ENCODE measurements at regions of chr1 and their contacts with region 1.

Region 1: GRCh38 chr1:226121587-226122400 is 59.3 kb downstream of the H3-3A start:
- DNase-seq: peak; percentile 44 to 86 (median 75)
- ATAC-seq: peak; percentile 59
- H3K4me3 ChIP-seq: peak overlapping the region; percentile 48 to 61
- H3K4me3 Mint-ChIP-seq: peak overlapping the region; percentile 83
- H3K27ac ChIP-seq: peak overlapping the region; percentile 57 to 70
- H3K27ac Mint-ChIP-seq: peak overlapping the region; percentile 71
- H3K4me1 ChIP-seq: peaks cover 23% of the 10 kb centered on the region
- H3K4me1 Mint-ChIP-seq: peaks cover 26% of the 10 kb centered on the region
- H3K27me3 ChIP-seq: no peaks in the 10 kb centered on the region
- H3K27me3 Mint-ChIP-seq: no peaks in the 10 kb centered on the region
- CTCF ChIP-seq: peak; percentile 82

Region 2: GRCh38 chr1:225467193-225468020 is 654.4 kb before region 1 on chr1:
- CTCF ChIA-PET with region 1: interaction called, 3 read pairs
- POLR2A ChIA-PET with region 1: no interaction called
- intact Hi-C with region 1: loop called in 1 of 2 experiments (anchors 2 kb)
- DNase-seq: peak; percentile 67 to 93 (median 86)
- ATAC-seq: peak; percentile 81
- H3K4me3 ChIP-seq: peak overlapping the region; percentile 60 to 86
- H3K4me3 Mint-ChIP-seq: peak overlapping the region; percentile 92
- H3K27ac ChIP-seq: peak overlapping the region; percentile 88 to 95
- H3K27ac Mint-ChIP-seq: peak overlapping the region; percentile 98
- H3K4me1 ChIP-seq: peaks cover 35% of the 10 kb centered on the region
- H3K4me1 Mint-ChIP-seq: peaks cover 43% of the 10 kb centered on the region
- H3K27me3 ChIP-seq: no peaks in the 10 kb centered on the region
- H3K27me3 Mint-ChIP-seq: no peaks in the 10 kb centered on the region
- CTCF ChIP-seq: no peak

Region 3: GRCh38 chr1:225999227-225999911 is 122.4 kb before region 1 on chr1 and contains the start of gene SDE2:
- CTCF ChIA-PET with region 1: no interaction called
- POLR2A ChIA-PET with region 1: interaction called, 9 read pairs
- intact Hi-C with region 1: loop called (anchors 1 to 2 kb)
- DNase-seq: peak; percentile 99 to 100 (median 100)
- ATAC-seq: peak; percentile 80
- H3K4me3 ChIP-seq: peak within 1 kb of the TSS; percentile 82 to 92
- H3K4me3 Mint-ChIP-seq: peak within 1 kb of the TSS; percentile 100
- H3K27ac ChIP-seq: peak within 1 kb of the TSS; percentile 99
- H3K27ac Mint-ChIP-seq: peak within 1 kb of the TSS; percentile 100
- H3K4me1 ChIP-seq: peaks cover 88% of the 10 kb centered on the region
- H3K4me1 Mint-ChIP-seq: peaks cover 79% of the 10 kb centered on the region
- H3K27me3 ChIP-seq: no peaks in the 10 kb centered on the region
- H3K27me3 Mint-ChIP-seq: no peaks in the 10 kb centered on the region
- CTCF ChIP-seq: no peak
- total RNA-seq, gene SDE2: 53.3 to 55.3 TPM

Region 4: GRCh38 chr1:226083302-226084101 is 38.3 kb before region 1 on chr1:
- CTCF ChIA-PET with region 1: interaction called, 9 read pairs
- POLR2A ChIA-PET with region 1: interaction called, 5 read pairs
- intact Hi-C with region 1: loop called (anchors 1 to 2 kb)
- DNase-seq: peak; percentile 80 to 97 (median 93)
- ATAC-seq: peak; percentile 97
- H3K4me3 ChIP-seq: peak overlapping the region; percentile 78 to 79
- H3K4me3 Mint-ChIP-seq: peak overlapping the region; percentile 90
- H3K27ac ChIP-seq: peak overlapping the region in 1 of 2 experiments; percentile 15
- H3K27ac Mint-ChIP-seq: peak overlapping the region; percentile 81
- H3K4me1 ChIP-seq: peaks cover 10% of the 10 kb centered on the region
- H3K4me1 Mint-ChIP-seq: peaks cover 11% of the 10 kb centered on the region
- H3K27me3 ChIP-seq: no peaks in the 10 kb centered on the region
- H3K27me3 Mint-ChIP-seq: no peaks in the 10 kb centered on the region
- CTCF ChIP-seq: no peak

Region 5: GRCh38 chr1:226109829-226110248 is 12.0 kb before region 1 on chr1:
- CTCF ChIA-PET with region 1: interaction called, 27 read pairs
- POLR2A ChIA-PET with region 1: interaction called, 6 read pairs
- intact Hi-C with region 1: loop called (anchors 1 kb)
- DNase-seq: peak; percentile 49 to 89 (median 76)
- ATAC-seq: peak; percentile 85
- H3K4me3 ChIP-seq: peak overlapping the region; percentile 54 to 63
- H3K4me3 Mint-ChIP-seq: peak overlapping the region; percentile 94
- H3K27ac ChIP-seq: peak overlapping the region; percentile 52 to 74
- H3K27ac Mint-ChIP-seq: peak overlapping the region; percentile 88
- H3K4me1 ChIP-seq: peaks cover 11% of the 10 kb centered on the region
- H3K4me1 Mint-ChIP-seq: peaks cover 18% of the 10 kb centered on the region
- H3K27me3 ChIP-seq: no peaks in the 10 kb centered on the region
- H3K27me3 Mint-ChIP-seq: no peaks in the 10 kb centered on the region
- CTCF ChIP-seq: no peak

Region 6: DNA sequence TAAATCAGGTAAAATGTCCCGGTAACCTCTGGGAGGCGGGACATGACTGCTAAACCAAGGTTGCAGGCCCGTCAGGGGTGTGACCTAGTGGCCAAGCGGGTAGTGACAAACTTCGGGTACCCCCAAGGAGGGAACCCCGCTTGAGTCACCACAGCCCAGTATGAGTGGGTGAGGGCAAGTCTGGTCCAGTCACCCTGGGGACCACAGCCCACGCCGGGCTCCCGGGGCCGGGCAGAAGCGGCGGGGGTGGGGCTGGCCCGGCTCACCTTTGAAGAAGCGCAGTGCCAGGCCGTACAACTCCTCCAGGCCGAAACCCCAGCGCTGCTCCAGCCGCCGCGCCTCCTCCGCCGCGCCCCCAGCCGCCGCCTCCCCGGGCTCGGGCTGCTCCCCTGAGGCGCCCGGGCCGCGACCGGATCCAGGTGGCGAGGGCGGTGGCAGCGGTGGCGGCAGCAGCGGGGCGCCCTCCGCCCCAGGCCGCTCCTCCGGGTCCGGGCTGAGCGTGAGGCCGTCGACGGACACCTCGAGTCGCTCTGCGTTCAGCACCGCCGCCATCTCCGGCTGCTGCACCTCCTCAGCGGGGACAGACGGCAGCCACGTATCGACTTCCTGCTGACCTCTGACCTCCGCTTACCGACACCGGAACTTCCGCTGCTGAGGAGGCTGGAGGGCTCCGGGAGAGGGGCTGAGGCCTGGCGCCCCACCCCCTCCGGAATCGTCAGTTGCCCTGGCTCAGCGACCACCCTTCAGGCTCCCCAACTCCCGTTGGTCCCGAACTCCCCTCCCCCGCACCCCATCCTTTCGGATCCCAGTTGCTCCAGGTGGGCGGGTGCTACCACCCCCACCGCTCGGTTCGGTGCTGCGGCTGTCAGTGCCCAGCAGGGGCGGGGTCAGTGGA is 64.6 kb after region 1 on chr1 and contains the start of gene ACBD3:
- CTCF ChIA-PET with region 1: interaction called, 30 read pairs
- POLR2A ChIA-PET with region 1: no interaction called
- intact Hi-C with region 1: loop called in 1 of 2 experiments (anchors 2 kb)
- DNase-seq: peak; percentile 67 to 95 (median 87)
- ATAC-seq: peak; percentile 97
- H3K4me3 ChIP-seq: peak within 1 kb of the TSS; percentile 82 to 90
- H3K4me3 Mint-ChIP-seq: peak within 1 kb of the TSS; percentile 92
- H3K27ac ChIP-seq: peak within 1 kb of the TSS; percentile 72 to 88
- H3K27ac Mint-ChIP-seq: peak within 1 kb of the TSS; percentile 95
- H3K4me1 ChIP-seq: peaks cover 41% of the 10 kb centered on the region
- H3K4me1 Mint-ChIP-seq: peaks cover 40% of the 10 kb centered on the region
- H3K27me3 ChIP-seq: no peaks in the 10 kb centered on the region
- H3K27me3 Mint-ChIP-seq: no peaks in the 10 kb centered on the region
- CTCF ChIP-seq: no peak
- total RNA-seq, gene ACBD3: 40.9 to 41.4 TPM

Region 7: DNA sequence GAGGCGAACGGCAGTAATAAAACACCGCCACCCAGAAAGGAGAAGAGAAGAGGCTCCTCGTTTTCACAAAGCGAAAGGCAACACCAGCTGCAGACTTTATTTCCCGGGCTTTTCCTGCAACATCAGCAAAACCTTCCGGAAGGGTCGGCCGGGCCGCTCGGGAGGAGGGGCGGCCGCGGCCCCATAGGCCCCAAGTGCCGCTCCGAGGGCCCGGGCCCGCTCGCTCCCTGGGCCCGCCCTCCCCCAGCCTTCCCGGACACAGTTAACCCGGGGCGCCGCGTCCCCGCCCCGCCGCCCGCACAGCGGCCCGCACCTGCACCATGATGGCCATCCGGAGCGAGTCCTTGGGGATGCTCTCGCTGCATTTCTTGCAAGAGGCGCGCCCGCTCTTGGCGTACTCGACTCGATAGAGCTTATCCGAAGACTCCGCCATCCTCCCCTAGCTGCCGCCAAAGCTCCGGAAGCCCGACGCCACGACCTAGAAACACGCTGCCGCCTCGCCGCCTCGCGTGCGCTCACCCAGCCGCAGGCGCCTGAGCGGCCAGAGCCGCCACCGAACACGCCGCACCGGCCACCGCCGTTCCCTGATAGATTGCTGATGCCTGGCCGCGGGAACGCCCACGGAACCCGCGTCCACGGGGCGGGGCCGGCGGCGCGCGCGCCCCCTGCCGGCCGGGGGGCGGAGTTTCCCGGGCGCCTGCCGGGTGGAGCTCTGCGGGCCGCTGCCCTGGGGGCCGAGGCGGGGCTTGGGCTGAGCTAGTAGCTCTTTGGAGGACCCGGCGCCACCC is 285.9 kb after region 1 on chr1 and contains the start of gene PARP1:
- CTCF ChIA-PET with region 1: interaction called, 5 read pairs
- POLR2A ChIA-PET with region 1: no interaction called
- intact Hi-C with region 1: loop called (anchors 5 to 10 kb)
- DNase-seq: peak; percentile 78 to 94 (median 86)
- ATAC-seq: peak; percentile 87
- H3K4me3 ChIP-seq: peak within 1 kb of the TSS; percentile 68 to 92
- H3K4me3 Mint-ChIP-seq: peak within 1 kb of the TSS; percentile 94
- H3K27ac ChIP-seq: peak within 1 kb of the TSS; percentile 64 to 65
- H3K27ac Mint-ChIP-seq: peak within 1 kb of the TSS; percentile 90
- H3K4me1 ChIP-seq: peaks cover 45% of the 10 kb centered on the region
- H3K4me1 Mint-ChIP-seq: peaks cover 46% of the 10 kb centered on the region
- H3K27me3 ChIP-seq: no peaks in the 10 kb centered on the region
- H3K27me3 Mint-ChIP-seq: no peaks in the 10 kb centered on the region
- CTCF ChIP-seq: peak; percentile 73
- total RNA-seq, gene PARP1: 38.6 to 46.2 TPM

Measured in CD8-positive, alpha-beta T cell (primary cell).